ENCODE measurements at regions of chr3 and their contacts with region 1.

Region 1: DNA sequence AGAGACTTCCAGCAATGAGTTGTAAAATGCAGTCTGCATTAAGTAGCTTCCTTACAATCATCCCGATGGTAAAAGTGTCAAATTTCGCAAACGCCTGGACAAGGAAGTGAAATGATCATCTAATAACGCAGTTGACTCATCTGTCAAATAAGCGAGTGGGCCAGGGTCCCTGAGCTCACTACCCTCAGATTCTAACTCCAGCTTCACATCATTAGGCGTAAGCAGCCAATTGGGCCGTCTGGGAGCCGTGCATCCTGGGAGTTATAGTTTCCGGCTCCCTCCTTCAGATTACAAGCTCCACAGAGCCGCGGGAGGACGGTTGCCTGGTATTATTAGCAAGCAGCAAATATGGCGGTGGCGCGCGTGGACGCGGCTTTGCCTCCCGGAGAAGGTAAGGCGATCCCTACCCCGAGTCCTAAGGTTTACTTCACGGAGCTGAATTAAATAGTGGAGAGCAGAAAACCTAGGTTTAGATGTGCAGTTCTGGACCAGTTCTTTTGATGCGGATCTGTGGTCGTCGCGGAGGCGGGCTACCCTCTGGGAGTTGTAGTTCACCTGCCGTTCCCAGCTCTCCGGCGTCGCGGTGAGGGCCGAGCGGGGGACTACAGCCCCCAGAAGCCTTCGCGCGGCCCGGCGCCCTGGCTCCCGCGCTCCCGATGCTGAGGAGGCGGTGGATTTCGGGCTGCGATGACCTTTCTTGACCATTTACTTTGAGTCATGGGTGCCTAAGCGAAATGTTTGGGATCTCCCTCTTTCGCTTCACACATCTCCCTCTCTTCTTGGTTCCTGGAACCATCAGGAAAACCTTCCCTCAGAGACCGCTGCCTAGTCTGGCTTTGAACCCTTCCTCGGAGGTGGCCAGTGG is at the start of gene CEP97:
- DNase-seq: peak; percentile 74 to 97 (median 82)
- ATAC-seq: peak; percentile 95
- H3K4me3 Mint-ChIP-seq: peak within 1 kb of the TSS; percentile 94 to 100 (median 98)
- H3K27ac Mint-ChIP-seq: peak within 1 kb of the TSS; percentile 94 to 99 (median 98)
- H3K4me1 Mint-ChIP-seq: peaks cover 15 to 42% (median 33%) of the 10 kb centered on the region in 4 donors
- H3K27me3 Mint-ChIP-seq: no peaks in the 10 kb centered on the region
- polyA plus RNA-seq, gene CEP97: 1.8 to 5.3 (median 3.5) TPM

Region 2: DNA sequence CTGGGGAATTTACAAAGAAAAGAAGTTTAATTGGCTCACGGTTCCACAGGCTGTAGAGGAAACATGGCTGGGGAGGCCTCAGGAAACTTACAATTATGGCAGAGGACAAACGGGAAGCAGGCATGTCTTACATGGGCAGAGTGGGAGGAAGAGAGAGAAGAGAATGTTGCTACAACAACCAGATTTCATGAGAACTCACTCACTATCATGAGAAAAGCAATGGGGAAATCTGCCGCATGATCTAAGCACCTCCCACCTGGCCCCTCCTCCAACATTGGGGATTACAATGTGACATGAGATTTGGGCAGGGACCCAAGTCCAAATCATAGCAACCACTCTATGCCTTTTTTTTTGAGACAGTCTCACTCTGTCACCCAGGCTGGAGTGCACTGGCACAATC is 121.8 kb before region 1 on chr3:
- POLR2A ChIA-PET with region 1: no interaction called
- DNase-seq: no peak
- ATAC-seq: no peak
- H3K4me3 Mint-ChIP-seq: no peak overlapping the region
- H3K27ac Mint-ChIP-seq: peak overlapping the region in 2 of 10 donors; percentile 6 to 54
- H3K4me1 Mint-ChIP-seq: peaks cover 0 to 3% (median under 1%) of the 10 kb centered on the region in 4 donors
- H3K27me3 Mint-ChIP-seq: no peaks in the 10 kb centered on the region

Region 3: DNA sequence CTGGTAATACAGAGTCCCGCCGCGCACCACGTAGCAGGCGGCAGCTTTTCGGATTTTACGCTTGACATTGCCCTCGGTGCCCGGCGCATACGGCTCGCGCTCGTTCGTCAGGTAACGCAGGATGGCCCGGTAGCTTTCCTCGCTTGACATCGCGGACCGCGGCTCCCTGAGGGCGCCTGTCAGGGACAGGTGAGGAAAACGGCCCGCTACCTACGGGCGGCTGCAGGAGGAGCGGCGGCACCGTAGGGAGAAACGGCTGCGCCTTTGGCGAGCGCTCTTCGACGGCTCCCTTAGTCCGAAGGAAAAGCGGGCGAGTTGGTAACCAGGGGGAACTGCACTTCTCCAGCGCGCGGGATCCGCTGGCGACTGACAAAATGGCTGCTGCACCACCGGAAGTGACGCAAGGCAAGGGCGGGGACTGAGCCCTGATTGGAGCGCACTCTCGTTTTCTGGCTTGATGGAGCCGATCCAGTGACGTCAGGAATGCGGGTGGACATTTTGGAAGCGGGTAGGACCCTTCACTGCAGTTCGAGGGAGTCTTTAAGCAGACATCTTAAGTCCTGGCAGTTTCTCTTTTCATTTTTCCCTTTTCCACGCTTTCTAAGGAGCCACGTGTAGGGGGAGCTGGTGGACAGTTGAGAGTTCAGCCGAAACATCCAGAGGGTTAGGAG is 47.7 kb before region 1 on chr3 and contains the start of gene ZBTB11:
- POLR2A ChIA-PET with region 1: interaction called, 23 read pairs
- DNase-seq: peak; percentile 97 to 100 (median 100)
- ATAC-seq: peak; percentile 69 to 71
- H3K4me3 Mint-ChIP-seq: peak within 1 kb of the TSS; percentile 92 to 99 (median 96)
- H3K27ac Mint-ChIP-seq: peak within 1 kb of the TSS; percentile 94 to 99 (median 99)
- H3K4me1 Mint-ChIP-seq: peaks cover 15 to 54% (median 48%) of the 10 kb centered on the region in 4 donors
- H3K27me3 Mint-ChIP-seq: peaks cover 0 to 2% (median 0%) of the 10 kb centered on the region in 5 donors
- polyA plus RNA-seq, gene ZBTB11: 8.6 to 10.9 (median 9.5) TPM

Region 4: GRCh38 chr3:101685870-101686412 is 38.6 kb before region 1 on chr3:
- POLR2A ChIA-PET with region 1: interaction called, 39 read pairs
- DNase-seq: no peak
- ATAC-seq: peak; percentile 8 to 11
- H3K4me3 Mint-ChIP-seq: peak overlapping the region; percentile 87 to 100 (median 100)
- H3K27ac Mint-ChIP-seq: peak overlapping the region; percentile 97 to 100 (median 100)
- H3K4me1 Mint-ChIP-seq: peaks cover 16 to 67% (median 46%) of the 10 kb centered on the region in 4 donors
- H3K27me3 Mint-ChIP-seq: no peaks in the 10 kb centered on the region

Measured in naive thymus-derived CD8-positive, alpha-beta T cell (primary cell).